Left cardiac atrium (tissue), 4 donors: ENCODE measurements at regions of chr5 and their contacts with region 1.

Region 1: DNA sequence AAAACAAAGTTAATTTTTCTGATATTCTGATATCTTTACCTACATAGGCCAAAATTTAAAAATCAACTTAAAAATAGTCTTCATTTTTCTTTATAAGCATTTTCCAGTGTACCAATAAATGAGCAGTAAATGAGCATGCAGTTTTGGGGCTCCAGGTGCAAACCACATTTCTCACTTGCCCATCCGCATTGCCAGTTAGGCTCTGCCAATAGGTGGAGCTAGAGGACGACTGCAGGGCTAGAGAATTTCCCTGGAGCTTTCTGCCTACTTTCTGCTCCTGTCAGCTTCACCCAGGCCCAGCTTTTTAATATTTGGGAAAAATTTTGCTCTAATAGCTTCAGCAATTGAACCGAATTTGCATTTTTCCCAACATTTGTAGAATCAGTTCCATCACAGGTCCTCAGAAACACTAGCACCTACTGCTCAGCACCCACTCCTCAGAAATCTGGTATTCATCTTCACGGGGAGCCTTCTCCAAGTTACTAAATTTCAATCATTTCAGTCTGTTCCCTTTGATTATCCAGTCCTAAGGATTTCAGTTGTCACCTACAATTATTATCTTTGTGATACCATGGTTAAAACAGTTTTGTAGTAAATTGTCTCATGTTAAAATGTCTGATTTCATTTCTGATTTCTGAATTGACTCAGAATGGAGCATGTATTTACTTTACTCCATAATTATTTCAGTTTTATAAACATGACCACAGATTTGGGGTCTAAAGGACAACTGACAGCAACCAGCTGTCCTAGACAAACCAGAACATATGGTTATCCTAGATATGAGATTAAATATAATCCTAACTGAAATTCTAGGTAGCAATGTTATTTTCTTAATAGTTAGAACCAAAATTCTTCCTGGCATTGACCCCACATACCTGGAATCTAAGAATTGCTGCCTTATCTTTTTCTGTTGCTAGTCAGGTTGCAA is 104.6 kb upstream of the FAM174A start:
- DNase-seq: peak; percentile 31
- ATAC-seq: no peak

Region 2: GRCh38 chr5:100175346-100175745 is 255.2 kb before region 1 on chr5:
- intact Hi-C with region 1: no loop called
- DNase-seq: no peak
- ATAC-seq: no peak

Region 3: GRCh38 chr5:100595152-100595811 is 164.8 kb after region 1 on chr5:
- intact Hi-C with region 1: no loop called
- DNase-seq: peak; percentile 37
- ATAC-seq: peak; percentile 88 to 98

Region 4: GRCh38 chr5:101385276-101385675 is 954.7 kb after region 1 on chr5:
- intact Hi-C with region 1: loop called in 1 of 2 experiments (anchors 10 kb)
- DNase-seq: no peak
- ATAC-seq: no peak